Left cardiac atrium (tissue), 4 donors: ENCODE measurements at regions of chr9 and their contacts with region 1.

Region 1: DNA sequence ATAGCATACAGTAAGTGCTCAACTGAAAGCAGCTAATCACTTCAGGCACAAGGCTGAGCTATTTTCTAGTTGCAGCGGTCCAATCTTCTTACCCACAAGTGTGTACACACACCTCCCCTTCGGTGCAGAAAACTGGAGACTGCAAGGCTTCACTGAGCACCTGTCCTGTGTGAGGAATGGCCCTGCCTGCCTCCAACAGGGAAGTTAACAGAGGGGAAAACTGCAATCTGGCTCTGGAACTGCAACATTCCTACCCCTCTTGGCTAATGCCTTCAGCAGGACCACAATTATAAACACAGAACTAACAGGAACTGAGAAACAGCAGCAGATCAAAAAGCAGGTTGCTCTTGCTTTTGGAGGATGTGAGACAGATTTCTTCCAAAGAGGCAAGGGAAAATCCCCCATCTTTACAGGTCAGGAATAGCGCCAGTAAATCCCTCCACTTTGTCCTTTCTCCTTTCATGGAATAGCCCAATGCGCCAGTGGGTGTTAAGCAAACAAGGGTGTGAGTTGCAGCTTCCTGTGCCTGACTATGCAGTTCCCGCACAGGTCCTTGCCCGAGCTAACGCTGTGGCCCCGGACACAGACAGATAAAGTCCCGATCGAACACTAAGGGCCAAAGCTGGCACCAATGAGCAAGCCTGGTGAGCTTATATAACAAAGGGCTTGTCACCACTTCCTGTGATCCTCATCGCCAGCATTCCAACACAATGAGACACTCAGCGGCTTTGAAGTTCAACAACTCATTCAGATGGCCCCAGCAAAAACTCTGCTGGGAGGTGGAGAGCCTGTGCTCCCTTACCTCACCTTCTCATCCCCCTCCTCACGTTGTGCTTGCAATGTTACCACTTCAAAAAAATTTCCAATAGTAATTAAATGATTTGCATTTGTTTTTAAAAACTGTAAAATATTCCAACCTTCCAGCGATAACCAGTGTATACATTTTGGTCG is 21.5 kb downstream of the SHB start:
- DNase-seq: peak; percentile 76
- ATAC-seq: peak; percentile 82

Region 2: DNA sequence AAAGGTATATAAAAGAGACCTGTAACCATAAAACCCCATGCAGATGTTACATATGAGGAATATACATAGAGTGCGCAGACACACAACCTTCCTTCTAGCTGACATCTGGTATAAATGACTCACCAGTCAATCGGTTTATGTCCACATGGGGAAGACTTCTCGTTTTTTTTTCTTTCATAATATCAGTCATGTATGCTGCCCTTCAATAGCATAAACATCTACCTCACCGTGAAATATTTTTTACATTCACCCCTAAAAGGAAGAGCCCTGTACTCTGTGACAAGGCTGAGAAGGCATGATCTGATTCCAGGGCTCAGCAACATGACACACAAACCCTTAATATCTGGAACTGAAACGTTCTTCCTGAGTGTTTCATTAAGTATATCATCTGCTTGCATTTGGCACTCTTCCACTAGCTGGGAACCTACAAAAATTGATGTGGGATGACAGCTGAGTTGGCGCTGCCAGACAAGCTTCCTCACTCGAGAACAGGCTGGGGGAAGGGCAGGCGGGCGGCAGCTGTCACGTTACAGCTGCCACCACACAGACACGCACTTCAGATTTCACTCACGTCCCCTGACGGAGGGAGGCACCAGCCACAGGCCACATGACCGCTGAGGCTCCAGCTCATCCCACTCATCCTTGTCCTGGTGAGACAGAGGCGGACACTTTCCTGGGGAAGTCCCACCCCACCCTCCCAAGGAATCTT is 52.8 kb before region 1 on chr9:
- intact Hi-C with region 1: loop called in 1 of 2 experiments (anchors 10 kb)
- DNase-seq: peak; percentile 86
- ATAC-seq: peak; percentile 88 to 90

Region 3: DNA sequence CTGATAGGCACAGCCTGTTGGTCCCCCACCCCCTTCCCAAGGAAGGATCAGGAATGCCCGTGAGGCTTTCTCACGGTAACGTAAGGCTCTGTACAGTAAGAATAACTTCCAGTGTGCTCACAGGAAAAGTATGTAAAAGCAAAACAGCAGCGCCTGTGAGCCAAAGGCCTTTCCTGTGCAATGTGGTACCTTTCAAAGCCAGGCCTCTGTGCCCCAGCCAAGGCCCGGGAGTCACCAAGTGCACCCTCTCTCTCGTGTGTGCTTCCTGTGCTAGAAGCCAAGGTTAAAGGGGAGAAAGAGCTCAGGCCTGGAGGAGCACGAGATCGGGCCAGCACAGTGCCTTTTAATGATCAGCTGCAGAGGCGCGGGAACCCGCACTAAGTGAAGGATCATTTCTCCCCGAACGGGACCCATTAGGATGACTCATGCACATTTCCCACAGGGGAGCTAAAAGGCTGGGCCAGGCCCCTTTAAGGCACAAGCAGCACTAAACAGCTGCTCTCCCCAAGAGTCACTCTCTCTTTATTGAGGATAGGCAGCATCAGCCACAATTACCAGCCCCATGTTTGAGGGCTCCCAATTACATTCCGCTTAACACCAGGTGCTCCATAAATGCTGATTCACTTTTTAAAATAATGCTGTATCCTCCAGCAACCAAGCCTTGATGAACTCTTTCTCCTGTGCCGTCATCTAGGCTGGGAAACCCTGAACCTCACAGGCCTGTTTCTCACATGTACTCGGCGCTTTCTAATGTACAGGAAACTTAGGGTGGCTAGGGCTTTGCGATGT is 21.4 kb before region 1 on chr9:
- intact Hi-C with region 1: no loop called
- DNase-seq: peak; percentile 60
- ATAC-seq: peak; percentile 56 to 64

Region 4: GRCh38 chr9:38107811-38108304 is 60.3 kb after region 1 on chr9:
- intact Hi-C with region 1: no loop called
- DNase-seq: no peak
- ATAC-seq: peak in 1 of 2 donors; percentile 51